Activated CD4-positive, alpha-beta T cell treated with anti-CD3 and anti-CD28 coated beads for 36 hours (primary cell): ENCODE measurements at regions of chr22 and their contacts with region 1.

Region 1: GRCh38 chr22:23402275-23403151 is 177.6 kb downstream of the IGLL1 start:
- DNase-seq: peak; percentile 82
- ATAC-seq: peak; percentile 95
- H3K4me3 Mint-ChIP-seq: no peak overlapping the region
- H3K27ac Mint-ChIP-seq: no peak overlapping the region
- H3K4me1 Mint-ChIP-seq: no peaks in the 10 kb centered on the region
- H3K27me3 Mint-ChIP-seq: no peaks in the 10 kb centered on the region

Region 2: DNA sequence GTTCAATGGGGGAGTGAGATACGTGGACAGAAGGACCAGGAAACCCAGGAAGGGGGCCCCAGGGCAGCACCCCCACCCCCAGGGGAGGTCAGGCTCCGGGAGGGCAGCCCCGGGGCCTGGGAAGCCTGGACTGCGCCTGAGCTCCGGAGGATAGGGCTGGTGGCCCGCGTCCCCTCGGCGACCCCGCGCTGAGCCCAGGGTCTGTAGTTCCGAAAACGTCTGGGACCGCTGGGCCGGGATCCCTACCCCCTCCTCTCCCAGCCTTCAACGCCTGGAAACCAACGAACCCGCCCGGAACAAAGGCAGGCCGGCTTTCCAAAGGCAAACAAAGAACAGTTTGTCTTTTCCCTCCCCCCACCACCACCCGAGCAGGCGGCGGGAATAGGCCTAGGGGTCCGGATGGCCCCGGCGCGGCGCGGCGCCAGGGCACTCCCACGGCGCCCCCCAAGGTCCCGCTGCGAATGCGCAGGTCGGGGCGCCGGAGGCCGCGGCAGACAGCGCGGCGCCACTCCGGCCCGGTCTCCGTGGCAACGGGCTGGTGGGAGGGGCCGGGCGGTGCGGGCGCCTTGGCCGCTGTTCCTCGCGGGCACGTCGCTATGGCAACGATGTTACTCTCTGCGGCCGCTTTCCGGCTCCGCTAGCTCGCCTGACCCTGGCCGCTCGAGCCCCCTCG is 119.1 kb after region 1 on chr22:
- CTCF ChIA-PET with region 1: no interaction called
- POLR2A ChIA-PET with region 1: no interaction called
- intact Hi-C with region 1: loop called in 1 of 2 experiments (anchors 5 kb)
- DNase-seq: peak; percentile 85
- ATAC-seq: peak; percentile 97
- H3K4me3 Mint-ChIP-seq: peak overlapping the region; percentile 44
- H3K27ac Mint-ChIP-seq: no peak overlapping the region
- H3K4me1 Mint-ChIP-seq: peaks cover 5% of the 10 kb centered on the region
- H3K27me3 Mint-ChIP-seq: peaks cover 19% of the 10 kb centered on the region